Activated CD4-positive, alpha-beta memory T cell treated with anti-CD3 and anti-CD28 coated beads for 36 hours (primary cell): ENCODE measurements at regions of chr2 and their contacts with region 1.

Region 1: GRCh38 chr2:136327162-136327852 is 209.4 kb upstream of the CXCR4 start:
- DNase-seq: peak; percentile 93
- H3K4me3 Mint-ChIP-seq: peak overlapping the region; percentile 60
- H3K27ac Mint-ChIP-seq: peak overlapping the region; percentile 90
- H3K4me1 Mint-ChIP-seq: peaks cover 73% of the 10 kb centered on the region
- H3K27me3 Mint-ChIP-seq: no peaks in the 10 kb centered on the region

Region 2: DNA sequence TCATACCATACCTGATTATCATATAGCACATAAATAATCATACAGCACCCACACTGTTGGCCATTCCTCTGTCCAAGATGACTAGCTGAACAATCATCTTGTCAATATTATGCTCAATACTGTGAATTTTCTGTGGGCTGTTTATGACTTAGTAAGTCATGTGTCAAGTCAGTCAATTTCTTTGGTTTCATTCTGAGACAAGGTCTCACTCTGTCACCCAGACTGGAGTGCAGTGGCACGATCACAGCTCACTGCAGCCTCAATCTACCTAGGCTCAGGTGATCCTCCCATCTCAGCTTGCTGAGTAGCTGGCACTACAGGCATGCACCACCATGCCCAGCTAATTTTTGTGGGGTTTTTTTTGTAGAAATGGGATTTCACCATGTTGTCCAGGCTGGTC is 456.7 kb before region 1 on chr2:
- CTCF ChIA-PET with region 1: no interaction called
- POLR2A ChIA-PET with region 1: no interaction called
- intact Hi-C with region 1: loop called (anchors 5 kb)
- DNase-seq: peak; percentile 64
- H3K4me3 Mint-ChIP-seq: no peak overlapping the region
- H3K27ac Mint-ChIP-seq: peak overlapping the region; percentile 44
- H3K4me1 Mint-ChIP-seq: peaks cover 55% of the 10 kb centered on the region
- H3K27me3 Mint-ChIP-seq: no peaks in the 10 kb centered on the region

Region 3: DNA sequence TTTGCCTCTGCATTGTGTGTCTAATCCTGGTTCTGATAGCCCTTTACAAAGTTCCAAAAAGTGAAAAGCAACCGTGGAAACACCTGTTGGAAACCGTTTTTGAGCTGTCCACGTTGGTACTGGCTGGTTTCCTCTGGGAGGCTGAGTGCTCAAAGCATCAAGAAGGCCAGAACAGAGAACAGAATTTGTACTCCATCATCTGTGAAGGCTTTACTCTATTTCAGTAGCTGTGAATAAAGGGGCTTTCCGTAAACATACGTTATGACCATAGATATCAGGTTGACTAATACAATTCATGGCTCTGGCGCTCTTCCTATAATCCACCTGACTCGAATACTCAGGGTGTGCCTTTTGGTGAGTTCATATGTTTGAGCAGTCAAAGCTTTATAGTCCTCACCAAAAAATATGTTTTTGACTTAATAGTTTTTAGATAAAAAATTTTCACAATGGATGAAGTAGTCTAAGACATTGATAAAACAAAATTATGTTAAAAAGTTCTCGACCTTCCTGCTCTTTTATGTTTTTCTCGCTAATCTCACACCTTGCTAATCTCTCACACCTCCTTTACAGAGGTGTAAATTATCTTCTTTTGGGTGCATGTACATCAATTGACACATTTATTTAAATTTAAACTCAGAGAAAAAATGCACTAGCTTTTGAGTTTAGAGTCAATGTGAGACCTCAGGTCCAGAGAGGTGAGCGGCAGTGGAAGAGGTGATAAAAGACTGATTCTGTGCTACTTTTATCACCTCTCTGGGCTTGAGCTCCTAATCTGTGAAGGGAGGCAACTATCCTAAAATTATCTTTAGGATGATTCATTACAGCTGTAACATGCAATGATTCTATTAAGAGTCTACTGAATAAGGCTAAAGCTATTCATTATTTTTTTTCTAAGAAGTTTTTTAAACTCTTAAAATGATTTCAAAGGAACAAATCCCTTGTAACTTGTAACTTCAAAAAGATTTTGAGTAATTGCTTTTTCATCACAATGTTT is 274.6 kb before region 1 on chr2:
- CTCF ChIA-PET with region 1: no interaction called
- POLR2A ChIA-PET with region 1: interaction called, 6 read pairs
- intact Hi-C with region 1: loop called (anchors 1 kb)
- DNase-seq: peak; percentile 35
- H3K4me3 Mint-ChIP-seq: peak overlapping the region; percentile 57
- H3K27ac Mint-ChIP-seq: peak overlapping the region; percentile 99
- H3K4me1 Mint-ChIP-seq: peaks cover 86% of the 10 kb centered on the region
- H3K27me3 Mint-ChIP-seq: no peaks in the 10 kb centered on the region

Region 4: GRCh38 chr2:136207030-136207623 is 120.2 kb before region 1 on chr2:
- CTCF ChIA-PET with region 1: no interaction called
- POLR2A ChIA-PET with region 1: no interaction called
- intact Hi-C with region 1: loop called (anchors 2 kb)
- DNase-seq: peak; percentile 65
- H3K4me3 Mint-ChIP-seq: peak overlapping the region; percentile 3
- H3K27ac Mint-ChIP-seq: peak overlapping the region; percentile 96
- H3K4me1 Mint-ChIP-seq: peaks cover 46% of the 10 kb centered on the region
- H3K27me3 Mint-ChIP-seq: no peaks in the 10 kb centered on the region

Region 5: DNA sequence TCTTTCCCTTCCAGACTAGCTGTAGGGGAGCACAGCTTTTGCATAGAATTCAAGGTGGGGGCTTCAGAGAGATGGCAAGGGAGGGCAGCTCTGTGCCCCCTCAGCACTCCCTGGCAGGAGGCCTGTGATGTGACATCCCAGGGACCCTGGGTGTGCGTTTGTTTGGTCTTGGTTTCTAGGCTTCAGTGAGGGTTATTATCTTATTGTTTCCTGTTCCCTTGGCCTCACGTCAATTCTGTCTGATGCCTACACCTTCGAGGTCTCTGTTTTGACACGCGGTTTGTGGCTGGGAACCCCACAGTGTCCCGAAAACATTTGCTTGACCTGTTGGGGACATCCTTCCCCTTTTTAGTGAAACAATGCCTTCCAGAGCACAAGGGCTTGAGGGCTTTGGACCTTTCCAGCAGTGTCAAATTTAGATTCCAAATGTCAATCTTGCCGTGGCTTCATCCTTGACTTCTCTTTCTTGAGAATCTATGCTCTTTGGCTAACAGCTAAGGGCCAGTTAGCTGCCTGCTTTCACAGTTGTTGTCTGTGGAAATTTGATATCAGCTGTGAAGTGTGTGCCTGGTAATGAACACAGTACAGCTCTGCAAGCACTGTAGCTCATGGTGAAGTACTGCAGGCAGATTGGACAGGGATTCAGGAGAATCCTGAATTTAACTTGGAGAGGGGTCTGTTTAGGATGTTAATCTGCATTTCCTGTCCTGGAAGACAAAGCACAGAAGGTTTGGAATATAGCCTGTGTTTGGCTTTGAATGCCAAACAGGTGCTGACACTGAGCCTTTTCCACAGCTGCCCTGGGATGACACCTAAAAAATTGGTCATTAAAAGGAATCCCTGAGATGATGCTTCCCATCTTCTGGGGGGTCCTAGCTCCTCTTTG is 101.1 kb before region 1 on chr2:
- CTCF ChIA-PET with region 1: no interaction called
- POLR2A ChIA-PET with region 1: no interaction called
- intact Hi-C with region 1: no loop called
- DNase-seq: no peak
- H3K4me3 Mint-ChIP-seq: no peak overlapping the region
- H3K27ac Mint-ChIP-seq: no peak overlapping the region
- H3K4me1 Mint-ChIP-seq: peaks cover 13% of the 10 kb centered on the region
- H3K27me3 Mint-ChIP-seq: no peaks in the 10 kb centered on the region

Region 6: GRCh38 chr2:136305517-136306192 is 21.7 kb before region 1 on chr2:
- CTCF ChIA-PET with region 1: interaction called, 5 read pairs
- POLR2A ChIA-PET with region 1: interaction called, 22 read pairs
- intact Hi-C with region 1: loop called (anchors 1 kb)
- DNase-seq: peak; percentile 84
- H3K4me3 Mint-ChIP-seq: peak overlapping the region; percentile 33
- H3K27ac Mint-ChIP-seq: peak overlapping the region; percentile 72
- H3K4me1 Mint-ChIP-seq: peaks cover 34% of the 10 kb centered on the region
- H3K27me3 Mint-ChIP-seq: peaks cover 3% of the 10 kb centered on the region

Region 7: DNA sequence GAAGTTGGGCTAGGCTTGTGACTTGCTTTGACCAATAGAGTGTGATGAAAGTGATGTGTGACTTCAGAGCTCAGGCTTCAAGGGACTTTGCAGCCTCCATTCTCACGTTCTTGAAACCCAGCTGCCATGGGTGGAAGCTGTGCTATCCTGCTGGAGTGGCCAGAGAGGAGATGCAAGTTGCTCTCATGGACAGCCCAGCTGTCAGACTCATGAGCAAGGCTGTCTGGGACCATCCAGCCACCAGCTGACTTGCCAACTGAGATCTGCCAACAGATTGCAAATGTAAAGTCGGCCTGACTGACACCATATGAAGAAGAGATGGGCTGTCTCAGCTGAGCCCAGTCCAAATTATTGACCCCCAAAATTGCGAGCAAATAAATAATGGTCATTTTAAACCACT is 17.0 kb after region 1 on chr2:
- CTCF ChIA-PET with region 1: no interaction called
- POLR2A ChIA-PET with region 1: no interaction called
- intact Hi-C with region 1: no loop called
- DNase-seq: no peak
- H3K4me3 Mint-ChIP-seq: no peak overlapping the region
- H3K27ac Mint-ChIP-seq: no peak overlapping the region
- H3K4me1 Mint-ChIP-seq: no peaks in the 10 kb centered on the region
- H3K27me3 Mint-ChIP-seq: no peaks in the 10 kb centered on the region

Region 8: DNA sequence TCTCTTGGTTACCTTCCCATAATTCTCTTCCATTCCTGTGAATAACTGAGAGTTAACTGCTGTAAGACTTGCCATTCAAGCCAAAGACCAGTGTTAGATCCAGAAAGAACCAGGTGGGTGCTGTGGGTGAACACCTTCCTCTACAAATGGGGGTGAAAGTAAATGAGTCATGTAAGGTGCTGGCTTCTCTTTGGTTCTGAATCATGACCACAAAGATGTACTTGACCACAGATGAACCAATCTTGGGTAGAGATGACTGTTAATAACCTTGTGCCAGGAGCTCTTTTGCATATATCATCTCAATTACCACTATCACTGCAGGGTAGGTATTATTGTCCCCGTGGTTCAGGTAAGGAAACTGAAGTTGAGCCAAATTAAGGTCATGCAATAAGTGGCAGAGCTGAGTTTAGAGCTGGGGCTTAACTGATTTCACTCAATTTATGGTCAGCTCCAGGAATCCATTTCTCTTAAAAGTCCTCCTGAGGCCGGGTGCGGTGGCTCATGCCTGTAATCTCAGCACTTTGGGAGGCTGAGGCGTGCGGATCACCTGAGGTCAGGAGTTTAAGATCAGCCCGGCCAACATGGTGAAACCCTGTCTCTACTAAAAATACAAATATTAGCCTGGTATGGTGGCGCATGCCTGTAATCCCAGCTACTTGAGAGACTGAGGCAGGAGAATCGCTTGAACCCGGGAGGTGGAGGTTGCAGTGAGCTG is 35.5 kb after region 1 on chr2:
- CTCF ChIA-PET with region 1: interaction called, 8 read pairs
- POLR2A ChIA-PET with region 1: interaction called, 7 read pairs
- intact Hi-C with region 1: loop called (anchors 1 kb)
- DNase-seq: peak; percentile 67
- H3K4me3 Mint-ChIP-seq: peak overlapping the region; percentile 25
- H3K27ac Mint-ChIP-seq: peak overlapping the region; percentile 53
- H3K4me1 Mint-ChIP-seq: peaks cover 56% of the 10 kb centered on the region
- H3K27me3 Mint-ChIP-seq: peaks cover 5% of the 10 kb centered on the region

Region 9: DNA sequence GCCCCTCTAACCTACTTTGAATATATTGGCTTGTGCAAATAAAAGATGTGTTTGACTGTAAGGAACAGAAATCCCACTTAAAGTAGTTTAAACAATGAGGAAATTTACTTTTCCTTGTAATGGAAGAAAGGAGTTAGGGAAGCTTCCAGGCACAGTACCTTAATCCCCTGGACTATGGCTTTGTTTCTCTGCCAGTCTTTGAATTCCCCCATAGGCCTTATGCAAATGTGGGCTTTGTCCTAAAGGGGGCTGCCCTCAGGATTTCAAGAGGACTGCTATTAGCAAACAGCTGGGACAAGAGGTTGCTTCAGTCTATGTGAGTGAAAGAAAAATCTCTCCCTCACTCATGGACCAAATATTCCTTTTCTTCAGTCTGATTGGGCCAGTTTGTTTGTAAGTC is 182.9 kb after region 1 on chr2:
- CTCF ChIA-PET with region 1: no interaction called
- POLR2A ChIA-PET with region 1: no interaction called
- intact Hi-C with region 1: no loop called
- DNase-seq: no peak
- H3K4me3 Mint-ChIP-seq: no peak overlapping the region
- H3K27ac Mint-ChIP-seq: no peak overlapping the region
- H3K4me1 Mint-ChIP-seq: no peaks in the 10 kb centered on the region
- H3K27me3 Mint-ChIP-seq: peaks cover 5% of the 10 kb centered on the region

Region 10: DNA sequence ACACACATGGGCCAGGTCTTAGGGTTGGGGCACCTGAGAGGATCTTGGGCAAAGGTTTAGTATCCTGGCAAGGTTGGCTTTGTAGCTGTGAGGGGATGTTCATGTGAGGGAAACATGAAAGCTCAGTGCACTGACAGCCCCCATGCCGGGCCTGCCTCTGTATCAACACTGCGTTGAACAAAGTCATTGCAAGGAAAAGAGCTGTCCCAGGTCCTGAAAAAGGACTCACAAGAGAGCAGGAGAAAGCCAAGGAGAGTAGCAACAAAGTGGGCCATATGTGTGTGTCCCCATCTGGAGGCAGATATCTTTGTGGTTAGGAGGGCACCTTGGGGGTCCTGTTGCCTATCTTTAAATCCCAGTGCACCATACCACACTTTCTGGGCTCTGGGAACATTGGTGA is 200.3 kb after region 1 on chr2:
- CTCF ChIA-PET with region 1: no interaction called
- POLR2A ChIA-PET with region 1: no interaction called
- intact Hi-C with region 1: no loop called
- DNase-seq: no peak
- H3K4me3 Mint-ChIP-seq: no peak overlapping the region
- H3K27ac Mint-ChIP-seq: no peak overlapping the region
- H3K4me1 Mint-ChIP-seq: no peaks in the 10 kb centered on the region
- H3K27me3 Mint-ChIP-seq: peaks cover 1% of the 10 kb centered on the region